CD4-positive, alpha-beta memory T cell (primary cell): ENCODE measurements at regions of chr2 and their contacts with region 1.

Region 1: DNA sequence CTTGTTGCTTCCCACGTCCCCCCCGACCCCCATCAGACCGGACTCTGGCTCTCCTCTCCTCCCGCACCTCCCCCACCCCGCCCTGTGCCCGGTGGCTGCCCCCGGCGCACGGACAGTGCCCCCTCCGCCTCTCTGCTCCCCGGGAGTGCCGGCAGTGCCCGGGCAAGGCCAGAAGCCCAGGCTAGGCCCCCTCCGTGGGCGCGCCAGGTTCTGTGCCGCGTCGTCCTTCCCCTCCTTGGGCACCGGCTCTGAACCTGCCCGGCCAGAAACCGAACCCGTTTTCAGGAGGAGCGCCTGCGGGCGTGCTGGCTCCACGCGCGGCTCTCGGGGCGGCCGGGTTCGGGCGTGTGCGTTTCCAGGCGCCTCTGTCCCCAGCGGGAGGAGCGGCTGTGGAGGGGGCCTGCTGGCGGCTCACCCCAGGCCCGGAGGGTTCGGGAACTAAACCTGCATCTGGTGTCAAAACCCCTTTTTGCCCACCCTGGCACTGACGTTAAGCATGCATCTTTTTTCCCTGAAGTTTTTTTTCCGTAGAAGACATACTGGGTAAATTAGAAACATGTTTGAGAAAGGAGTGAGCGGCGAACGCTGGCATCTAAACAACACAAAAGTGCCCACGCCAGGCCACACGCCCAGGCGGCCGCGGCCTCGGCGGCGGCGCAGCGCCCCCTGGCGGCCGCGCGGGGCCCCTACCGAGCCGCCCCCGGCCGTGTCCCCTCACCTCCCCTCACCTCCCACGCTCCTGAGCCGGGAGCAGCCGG is 123.9 kb upstream of the SLC1A4 start:
- DNase-seq: peak in 4 of 5 donors; percentile 69 to 75 (median 70)
- H3K4me3 ChIP-seq: peak overlapping the region in 1 of 2 donors; percentile 60
- H3K4me3 Mint-ChIP-seq: peak overlapping the region; percentile 79 to 88 (median 82)
- H3K27ac ChIP-seq: no peak overlapping the region
- H3K27ac Mint-ChIP-seq: peak overlapping the region in 1 of 7 donors; percentile 64
- H3K4me1 ChIP-seq: peaks cover 10% of the 10 kb centered on the region
- H3K4me1 Mint-ChIP-seq: peaks cover 0 to 3% (median under 1%) of the 10 kb centered on the region in 4 donors
- H3K27me3 ChIP-seq: no peaks in the 10 kb centered on the region
- H3K27me3 Mint-ChIP-seq: peaks cover 2 to 3% of the 10 kb centered on the region in 2 donors

Region 2: DNA sequence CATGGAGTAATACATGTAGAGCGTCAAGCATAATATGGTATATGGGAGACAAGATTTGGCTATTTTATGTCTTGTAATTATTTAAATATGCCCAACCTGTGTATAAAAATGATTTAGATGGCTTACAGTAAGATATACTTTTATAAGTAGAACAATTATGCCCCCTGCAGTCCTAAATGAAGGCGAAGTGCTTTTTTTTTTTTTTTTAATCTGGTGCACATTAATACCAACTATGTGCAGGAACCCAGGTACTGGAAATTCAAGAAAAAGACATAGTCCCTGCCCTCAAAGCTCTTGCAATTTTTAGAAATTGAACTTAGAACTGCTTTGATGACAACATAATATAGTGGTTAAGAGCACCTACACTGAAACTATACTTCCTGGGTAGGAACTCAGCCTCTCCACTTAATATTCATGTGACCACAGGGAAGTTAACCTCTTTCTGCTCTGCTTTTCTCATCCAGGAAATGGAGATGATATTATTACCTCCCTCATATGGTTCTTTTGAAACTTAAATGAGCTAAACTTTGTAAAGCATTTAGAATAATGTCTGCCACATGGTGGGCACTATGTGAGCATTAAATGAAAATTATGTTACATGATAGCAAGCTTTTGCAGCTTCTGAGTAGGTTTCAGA is 303.0 kb before region 1 on chr2:
- CTCF ChIA-PET with region 1: no interaction called
- POLR2A ChIA-PET with region 1: no interaction called
- intact Hi-C with region 1: loop called (anchors 1 kb)
- DNase-seq: peak in 4 of 5 donors; percentile 42 to 52 (median 46)
- H3K4me3 ChIP-seq: no peak overlapping the region
- H3K4me3 Mint-ChIP-seq: peak overlapping the region in 1 of 8 donors; percentile 25
- H3K27ac ChIP-seq: no peak overlapping the region
- H3K27ac Mint-ChIP-seq: peak overlapping the region in 3 of 7 donors; percentile 10 to 60 (median 43)
- H3K4me1 ChIP-seq: peaks cover 22% of the 10 kb centered on the region
- H3K4me1 Mint-ChIP-seq: peaks cover 17 to 43% (median 25%) of the 10 kb centered on the region in 4 donors
- H3K27me3 ChIP-seq: no peaks in the 10 kb centered on the region
- H3K27me3 Mint-ChIP-seq: no peaks in the 10 kb centered on the region

Region 3: DNA sequence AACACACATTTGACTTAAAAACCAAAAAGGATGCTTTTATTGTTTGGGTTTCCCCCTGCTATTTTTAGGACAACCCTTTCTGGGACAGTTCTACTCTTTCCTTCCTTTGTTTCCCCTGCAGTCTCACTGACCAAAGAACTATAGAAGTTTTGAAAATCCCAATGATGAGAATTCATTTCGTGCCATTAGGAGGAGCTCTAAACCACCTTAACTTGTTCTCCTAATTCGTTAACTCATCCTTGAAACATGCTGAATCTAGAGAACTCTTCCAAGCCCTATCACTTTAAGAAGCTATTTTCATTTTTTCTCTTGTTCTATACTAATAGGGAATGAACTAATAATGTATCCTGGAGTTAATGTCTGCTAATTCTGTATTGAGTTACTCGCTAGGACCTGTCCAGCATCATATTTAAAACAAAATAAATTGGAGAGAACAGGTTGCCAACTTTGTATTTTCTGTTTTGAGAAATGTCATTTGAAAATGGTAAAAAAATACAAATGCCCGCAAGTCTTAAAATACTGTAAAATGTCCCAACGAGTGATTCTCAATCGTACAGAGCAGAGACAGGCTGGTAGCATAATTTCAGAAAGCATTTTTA is 278.3 kb before region 1 on chr2:
- CTCF ChIA-PET with region 1: interaction called, 16 read pairs
- POLR2A ChIA-PET with region 1: no interaction called
- intact Hi-C with region 1: loop called (anchors 1 kb)
- DNase-seq: peak in 4 of 5 donors; percentile 26 to 46 (median 38)
- H3K4me3 ChIP-seq: no peak overlapping the region
- H3K4me3 Mint-ChIP-seq: no peak overlapping the region
- H3K27ac ChIP-seq: no peak overlapping the region
- H3K27ac Mint-ChIP-seq: no peak overlapping the region
- H3K4me1 ChIP-seq: no peaks in the 10 kb centered on the region
- H3K4me1 Mint-ChIP-seq: peaks cover 0 to 4% (median 2%) of the 10 kb centered on the region in 4 donors
- H3K27me3 ChIP-seq: no peaks in the 10 kb centered on the region
- H3K27me3 Mint-ChIP-seq: no peaks in the 10 kb centered on the region

Region 4: GRCh38 chr2:64609227-64609941 is 255.9 kb before region 1 on chr2:
- CTCF ChIA-PET with region 1: interaction called, 6 read pairs
- POLR2A ChIA-PET with region 1: no interaction called
- intact Hi-C with region 1: loop called (anchors 2 kb)
- DNase-seq: peak; percentile 58 to 79 (median 76)
- H3K4me3 ChIP-seq: peak overlapping the region in 1 of 2 donors; percentile 61
- H3K4me3 Mint-ChIP-seq: peak overlapping the region; percentile 64 to 79 (median 75)
- H3K27ac ChIP-seq: peak overlapping the region; percentile 57
- H3K27ac Mint-ChIP-seq: peak overlapping the region; percentile 35 to 83 (median 70)
- H3K4me1 ChIP-seq: peaks cover 38% of the 10 kb centered on the region
- H3K4me1 Mint-ChIP-seq: peaks cover 10 to 33% (median 22%) of the 10 kb centered on the region in 4 donors
- H3K27me3 ChIP-seq: no peaks in the 10 kb centered on the region
- H3K27me3 Mint-ChIP-seq: no peaks in the 10 kb centered on the region